MCF 10A (cell line): ENCODE measurements at regions of chr15 and their contacts with region 1.

Region 1: GRCh38 chr15:66386204-66387123 is at the start of gene MAP2K1:
- DNase-seq: peak; percentile 97
- H3K4me3 Mint-ChIP-seq: peak within 1 kb of the TSS; percentile 100
- H3K27ac Mint-ChIP-seq: peak within 1 kb of the TSS; percentile 98
- H3K4me1 Mint-ChIP-seq: peaks cover 32% of the 10 kb centered on the region
- H3K27me3 Mint-ChIP-seq: no peaks in the 10 kb centered on the region
- CTCF ChIP-seq: peak; percentile 43
- total RNA-seq, gene MAP2K1: 108 and 115 TPM in 2 replicates

Region 2: DNA sequence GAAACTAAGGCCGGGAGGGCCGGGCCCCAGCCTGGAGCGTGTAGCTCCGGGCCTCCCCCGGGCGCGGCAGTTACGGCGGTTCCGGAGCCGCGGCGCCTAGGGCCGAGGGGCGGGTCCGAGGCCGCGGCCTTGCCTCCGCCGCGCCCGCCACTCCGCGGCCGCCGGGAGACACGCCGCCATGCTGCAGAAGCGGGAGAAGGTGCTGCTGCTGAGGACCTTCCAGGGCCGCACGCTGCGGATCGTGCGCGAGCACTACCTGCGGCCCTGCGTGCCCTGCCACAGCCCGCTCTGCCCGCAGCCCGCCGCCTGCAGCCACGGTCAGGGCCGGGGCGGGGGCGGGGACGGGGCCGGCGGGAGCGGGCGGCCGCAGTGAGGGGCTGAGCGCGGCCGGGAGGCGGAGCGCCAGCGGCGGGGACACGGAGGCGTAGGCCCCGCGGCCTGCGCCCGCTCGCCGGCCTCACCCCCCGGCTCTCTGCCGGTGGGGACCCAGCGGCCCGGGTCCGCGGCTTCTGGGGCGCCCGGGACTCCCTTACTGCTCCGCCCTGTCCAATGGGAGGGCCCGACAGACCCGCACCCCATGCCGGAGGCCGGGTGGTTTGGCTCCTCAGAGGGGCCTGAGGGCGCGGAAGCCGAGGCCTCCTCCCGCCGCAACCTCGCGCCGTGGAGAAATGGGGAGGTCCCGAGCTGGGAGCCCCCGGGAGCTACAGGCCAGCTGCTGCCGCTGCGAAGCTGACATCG is 92.9 kb before region 1 on chr15 and contains the start of gene DIS3L:
- CTCF ChIA-PET with region 1: interaction called, 4 read pairs
- POLR2A ChIA-PET with region 1: interaction called, 9 read pairs
- intact Hi-C with region 1: loop called (anchors 5 kb)
- DNase-seq: peak; percentile 70
- H3K4me3 Mint-ChIP-seq: peak within 1 kb of the TSS; percentile 83
- H3K27ac Mint-ChIP-seq: peak within 1 kb of the TSS; percentile 75
- H3K4me1 Mint-ChIP-seq: peaks cover 11% of the 10 kb centered on the region
- H3K27me3 Mint-ChIP-seq: no peaks in the 10 kb centered on the region
- CTCF ChIP-seq: no peak
- total RNA-seq, gene DIS3L: 35.6 and 42.8 TPM in 2 replicates

Region 3: DNA sequence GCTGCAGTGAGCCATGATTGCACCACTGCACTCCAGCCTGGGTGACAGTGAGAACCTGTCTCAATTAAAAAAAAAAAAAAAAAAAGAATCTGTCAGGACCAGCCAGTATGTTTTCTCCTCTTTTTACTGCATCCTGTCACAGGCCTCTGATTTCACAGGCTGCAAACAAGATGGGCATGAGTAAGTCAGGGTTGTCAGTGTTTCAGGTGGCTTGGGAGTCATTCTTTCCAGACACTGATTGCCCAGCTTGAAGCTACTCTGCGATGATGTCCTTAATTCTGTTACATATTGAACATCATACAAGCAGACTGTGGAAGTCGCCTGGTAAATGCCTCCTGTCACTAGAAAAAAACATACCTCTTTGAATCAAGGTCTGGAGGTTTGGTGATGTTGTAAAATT is 74.3 kb before region 1 on chr15:
- CTCF ChIA-PET with region 1: no interaction called
- POLR2A ChIA-PET with region 1: no interaction called
- intact Hi-C with region 1: no loop called
- DNase-seq: no peak
- H3K4me3 Mint-ChIP-seq: no peak overlapping the region
- H3K27ac Mint-ChIP-seq: no peak overlapping the region
- H3K4me1 Mint-ChIP-seq: no peaks in the 10 kb centered on the region
- H3K27me3 Mint-ChIP-seq: no peaks in the 10 kb centered on the region
- CTCF ChIP-seq: no peak

Region 4: GRCh38 chr15:66369773-66370651 is 16.5 kb before region 1 on chr15:
- CTCF ChIA-PET with region 1: interaction called, 5 read pairs
- POLR2A ChIA-PET with region 1: interaction called, 13 read pairs
- intact Hi-C with region 1: no loop called
- DNase-seq: peak; percentile 54
- H3K4me3 Mint-ChIP-seq: peak overlapping the region; percentile 48
- H3K27ac Mint-ChIP-seq: no peak overlapping the region
- H3K4me1 Mint-ChIP-seq: peaks cover 7% of the 10 kb centered on the region
- H3K27me3 Mint-ChIP-seq: no peaks in the 10 kb centered on the region
- CTCF ChIP-seq: no peak

Region 5: GRCh38 chr15:66459818-66460615 is 73.6 kb after region 1 on chr15:
- CTCF ChIA-PET with region 1: no interaction called
- POLR2A ChIA-PET with region 1: interaction called, 34 read pairs
- intact Hi-C with region 1: no loop called
- DNase-seq: peak; percentile 52
- H3K4me3 Mint-ChIP-seq: peak overlapping the region; percentile 16
- H3K27ac Mint-ChIP-seq: peak overlapping the region; percentile 83
- H3K4me1 Mint-ChIP-seq: peaks cover 25% of the 10 kb centered on the region
- H3K27me3 Mint-ChIP-seq: no peaks in the 10 kb centered on the region
- CTCF ChIP-seq: no peak

Region 6: DNA sequence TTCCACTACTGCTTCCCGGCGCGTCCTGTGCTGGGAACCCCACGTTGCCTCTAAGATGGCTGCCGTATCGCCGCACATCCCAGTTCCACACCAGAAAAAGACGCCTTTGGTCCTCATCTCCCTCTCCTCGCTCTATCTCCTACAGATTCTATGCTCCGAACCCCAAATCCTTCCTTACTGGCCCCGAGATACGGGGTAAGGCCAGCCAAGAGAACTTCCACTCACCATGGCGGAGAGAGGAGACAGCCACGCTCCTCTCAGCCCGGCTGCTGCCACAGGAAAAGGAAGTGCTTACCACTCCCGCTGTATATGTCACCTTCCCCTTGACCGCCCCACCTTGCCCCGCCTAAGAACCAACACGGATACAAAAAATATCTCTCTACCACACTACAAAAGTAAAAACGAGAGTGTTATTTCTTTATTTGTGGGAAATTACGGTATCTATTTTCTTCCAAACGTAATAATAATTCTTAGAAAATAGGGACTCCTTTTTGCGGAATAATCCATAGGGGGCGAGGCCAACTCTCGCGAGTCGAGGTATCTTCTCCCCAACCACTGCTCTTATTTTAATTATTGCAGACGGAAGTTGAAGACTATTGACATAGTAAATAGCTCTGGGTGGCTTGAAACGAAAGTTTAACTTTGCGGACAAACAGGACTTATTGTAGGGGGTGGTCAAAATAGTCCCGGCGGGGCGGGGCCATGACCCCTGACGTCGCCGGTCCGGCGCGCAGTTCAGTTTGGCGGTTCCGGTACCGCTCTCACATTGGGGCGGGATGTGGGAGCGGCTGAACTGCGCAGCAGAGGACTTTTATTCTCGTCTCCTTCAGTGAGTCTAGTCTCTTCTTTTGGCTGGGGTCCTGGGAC is 118.3 kb after region 1 on chr15 and contains the starts of genes RPL4 and ZWILCH:
- CTCF ChIA-PET with region 1: interaction called, 50 read pairs
- POLR2A ChIA-PET with region 1: interaction called, 158 read pairs
- intact Hi-C with region 1: no loop called
- DNase-seq: peak; percentile 83
- H3K4me3 Mint-ChIP-seq: peak within 1 kb of the TSS; percentile 83
- H3K27ac Mint-ChIP-seq: peak within 1 kb of the TSS; percentile 94
- H3K4me1 Mint-ChIP-seq: peaks cover 10% of the 10 kb centered on the region
- H3K27me3 Mint-ChIP-seq: no peaks in the 10 kb centered on the region
- CTCF ChIP-seq: no peak
- total RNA-seq, gene RPL4: 5,336 and 5,631 TPM in 2 replicates
- total RNA-seq, gene ZWILCH: 20.8 and 27.4 TPM in 2 replicates

Region 7: DNA sequence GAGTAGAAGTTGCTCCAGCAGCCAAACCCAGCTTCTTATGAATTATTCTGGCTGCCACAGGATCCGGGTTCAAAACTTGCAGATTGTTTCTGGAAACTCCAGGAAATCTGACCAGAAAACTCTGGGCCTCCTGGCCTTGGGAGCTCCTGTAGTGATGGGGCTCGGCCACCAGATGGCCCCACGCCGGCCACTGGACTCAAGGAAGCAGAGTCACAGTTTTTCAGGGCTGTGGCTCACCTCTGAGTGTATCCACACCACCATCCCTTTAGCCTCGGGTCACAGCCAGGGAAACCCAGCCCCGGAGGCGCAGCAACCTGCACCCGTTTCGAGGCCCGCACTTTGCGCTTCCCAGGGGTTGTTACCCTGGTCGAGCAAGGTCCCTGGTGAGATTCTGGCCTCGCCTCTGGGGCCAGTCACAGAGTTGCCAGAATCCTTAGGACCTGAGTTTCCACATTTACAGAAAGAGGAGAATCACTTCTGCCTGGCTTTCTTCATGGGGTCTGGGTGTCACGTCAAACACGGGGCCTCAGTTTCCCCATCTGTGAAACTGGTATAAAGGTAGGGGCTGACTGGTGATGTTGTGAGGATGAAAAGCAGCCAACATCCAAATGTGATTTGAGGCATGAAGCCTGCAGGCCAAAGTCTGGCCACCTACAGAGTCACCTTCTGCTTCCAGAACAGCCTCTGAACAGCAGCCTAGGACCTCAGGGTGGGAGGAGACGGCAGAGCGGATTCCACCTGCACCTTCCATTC is 232.9 kb after region 1 on chr15:
- CTCF ChIA-PET with region 1: no interaction called
- POLR2A ChIA-PET with region 1: no interaction called
- intact Hi-C with region 1: no loop called
- DNase-seq: peak; percentile 68
- H3K4me3 Mint-ChIP-seq: no peak overlapping the region
- H3K27ac Mint-ChIP-seq: no peak overlapping the region
- H3K4me1 Mint-ChIP-seq: no peaks in the 10 kb centered on the region
- H3K27me3 Mint-ChIP-seq: no peaks in the 10 kb centered on the region
- CTCF ChIP-seq: peak; percentile 86